Caco-2 (cell line): ENCODE measurements at regions of chr6 and their contacts with region 1.

Region 1: DNA sequence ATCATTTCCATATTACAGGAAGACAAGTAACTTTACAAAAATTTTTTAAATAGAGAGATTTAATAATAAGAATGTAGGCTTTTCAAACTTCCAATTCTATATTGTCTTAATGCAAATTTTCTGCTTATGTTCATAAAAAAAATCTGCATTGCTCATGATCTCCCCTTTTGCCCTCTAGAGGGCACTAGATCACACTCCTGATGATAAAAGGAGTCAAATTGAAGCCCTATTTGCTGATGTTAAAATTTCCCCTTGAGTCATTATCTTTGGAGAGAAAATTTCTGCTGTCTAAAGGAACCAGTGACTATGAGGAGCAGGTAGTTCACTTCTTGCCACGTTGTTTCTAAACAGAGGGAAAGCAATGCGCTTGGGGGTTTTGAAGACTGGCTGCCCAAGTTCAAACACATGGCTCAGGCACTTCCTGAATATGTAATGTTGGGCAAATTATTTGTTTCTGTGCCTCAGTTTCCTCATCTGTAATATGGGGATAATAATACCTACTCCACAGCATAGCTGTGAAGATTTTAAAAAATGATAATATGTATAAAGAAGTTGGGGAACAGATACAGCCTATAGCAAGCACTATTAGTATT is 874.2 kb downstream of the TFAP2A start:
- DNase-seq: peak in 1 of 2 experiments; percentile 27
- H3K4me3 ChIP-seq: no peak overlapping the region
- H3K4me3 Mint-ChIP-seq: no peak overlapping the region
- H3K27ac Mint-ChIP-seq: no peak overlapping the region
- H3K4me1 ChIP-seq: peaks cover 17% of the 10 kb centered on the region
- H3K4me1 Mint-ChIP-seq: peaks cover 7% of the 10 kb centered on the region
- H3K27me3 ChIP-seq: no peaks in the 10 kb centered on the region
- H3K27me3 Mint-ChIP-seq: no peaks in the 10 kb centered on the region
- CTCF ChIP-seq: peak; percentile 34 to 38

Region 2: GRCh38 chr6:9292975-9293374 is 247.7 kb before region 1 on chr6:
- CTCF ChIA-PET with region 1: no interaction called
- POLR2A ChIA-PET with region 1: no interaction called
- intact Hi-C with region 1: no loop called
- DNase-seq: no peak
- H3K4me3 ChIP-seq: no peak overlapping the region
- H3K4me3 Mint-ChIP-seq: no peak overlapping the region
- H3K27ac Mint-ChIP-seq: no peak overlapping the region
- H3K4me1 ChIP-seq: no peaks in the 10 kb centered on the region
- H3K4me1 Mint-ChIP-seq: no peaks in the 10 kb centered on the region
- H3K27me3 ChIP-seq: no peaks in the 10 kb centered on the region
- H3K27me3 Mint-ChIP-seq: no peaks in the 10 kb centered on the region
- CTCF ChIP-seq: no peak

Region 3: DNA sequence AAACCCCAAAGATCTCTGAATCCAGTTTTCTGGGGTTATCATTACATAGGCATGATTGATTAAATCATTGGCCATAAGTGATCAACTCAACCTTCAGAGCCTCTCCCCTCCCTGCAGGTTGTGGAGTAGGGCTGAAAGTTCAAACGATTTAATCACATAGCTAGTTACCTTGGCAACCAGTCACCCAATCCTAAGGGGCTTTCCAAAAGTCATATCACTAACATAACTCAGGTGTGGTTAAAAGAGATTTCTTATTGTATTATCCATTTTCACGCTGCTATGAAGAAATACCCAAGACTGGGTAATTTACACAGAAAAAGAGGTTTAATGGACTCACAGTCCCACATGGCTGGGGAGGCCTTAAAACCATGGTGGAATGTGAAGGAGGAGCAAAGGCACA is 170.2 kb before region 1 on chr6:
- CTCF ChIA-PET with region 1: no interaction called
- POLR2A ChIA-PET with region 1: no interaction called
- intact Hi-C with region 1: no loop called
- DNase-seq: no peak
- H3K4me3 ChIP-seq: no peak overlapping the region
- H3K4me3 Mint-ChIP-seq: no peak overlapping the region
- H3K27ac Mint-ChIP-seq: no peak overlapping the region
- H3K4me1 ChIP-seq: no peaks in the 10 kb centered on the region
- H3K4me1 Mint-ChIP-seq: no peaks in the 10 kb centered on the region
- H3K27me3 ChIP-seq: no peaks in the 10 kb centered on the region; the same call in 1 of the 2 replicates
- H3K27me3 Mint-ChIP-seq: no peaks in the 10 kb centered on the region
- CTCF ChIP-seq: no peak

Region 4: DNA sequence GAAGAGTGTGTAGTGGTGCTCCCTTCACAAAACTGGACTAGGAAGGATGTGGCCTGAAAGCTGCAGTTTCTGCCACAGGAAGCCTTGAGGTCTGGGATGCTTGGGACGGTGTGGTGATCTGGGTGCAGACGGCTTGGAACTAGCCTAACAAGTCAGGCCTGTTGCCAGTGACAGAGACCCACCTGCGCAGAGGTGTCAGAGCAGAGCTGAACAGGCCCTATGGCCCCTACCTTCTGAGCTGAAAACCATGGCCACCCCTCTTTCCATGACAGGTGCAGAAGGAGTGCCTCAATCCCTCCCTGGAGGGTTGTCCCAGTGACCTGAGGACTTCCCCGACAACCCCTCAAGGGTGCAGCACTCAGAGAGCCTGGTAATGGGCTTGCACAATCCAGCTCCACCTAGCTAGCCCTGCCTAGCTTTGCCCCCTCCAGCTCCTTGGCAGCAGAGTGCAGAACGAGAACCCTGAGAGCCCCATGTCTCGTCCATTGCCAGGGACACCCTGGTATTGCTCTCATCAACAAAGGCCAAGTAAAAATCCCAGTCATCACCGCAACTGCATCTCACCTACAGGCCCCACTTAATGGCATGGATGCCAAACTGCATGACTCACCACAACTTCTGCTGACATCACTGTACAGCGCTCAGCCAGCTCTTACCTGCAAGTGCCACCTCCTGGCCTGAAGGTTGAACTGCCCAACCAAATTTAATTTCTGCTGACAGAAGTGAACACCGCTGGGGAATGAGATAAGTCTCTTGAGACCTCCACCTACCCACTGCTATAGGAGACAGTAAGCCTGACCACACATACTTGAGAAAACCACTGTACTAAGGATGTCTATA is 311.1 kb after region 1 on chr6:
- CTCF ChIA-PET with region 1: no interaction called
- POLR2A ChIA-PET with region 1: no interaction called
- intact Hi-C with region 1: loop called (anchors 5 kb)
- DNase-seq: peak; percentile 36 to 39
- H3K4me3 ChIP-seq: no peak overlapping the region
- H3K4me3 Mint-ChIP-seq: no peak overlapping the region
- H3K27ac Mint-ChIP-seq: no peak overlapping the region
- H3K4me1 ChIP-seq: no peaks in the 10 kb centered on the region
- H3K4me1 Mint-ChIP-seq: no peaks in the 10 kb centered on the region
- H3K27me3 ChIP-seq: no peaks in the 10 kb centered on the region
- H3K27me3 Mint-ChIP-seq: no peaks in the 10 kb centered on the region
- CTCF ChIP-seq: no peak